ENCODE measurements at regions of chr22 and their contacts with region 1.

Region 1: DNA sequence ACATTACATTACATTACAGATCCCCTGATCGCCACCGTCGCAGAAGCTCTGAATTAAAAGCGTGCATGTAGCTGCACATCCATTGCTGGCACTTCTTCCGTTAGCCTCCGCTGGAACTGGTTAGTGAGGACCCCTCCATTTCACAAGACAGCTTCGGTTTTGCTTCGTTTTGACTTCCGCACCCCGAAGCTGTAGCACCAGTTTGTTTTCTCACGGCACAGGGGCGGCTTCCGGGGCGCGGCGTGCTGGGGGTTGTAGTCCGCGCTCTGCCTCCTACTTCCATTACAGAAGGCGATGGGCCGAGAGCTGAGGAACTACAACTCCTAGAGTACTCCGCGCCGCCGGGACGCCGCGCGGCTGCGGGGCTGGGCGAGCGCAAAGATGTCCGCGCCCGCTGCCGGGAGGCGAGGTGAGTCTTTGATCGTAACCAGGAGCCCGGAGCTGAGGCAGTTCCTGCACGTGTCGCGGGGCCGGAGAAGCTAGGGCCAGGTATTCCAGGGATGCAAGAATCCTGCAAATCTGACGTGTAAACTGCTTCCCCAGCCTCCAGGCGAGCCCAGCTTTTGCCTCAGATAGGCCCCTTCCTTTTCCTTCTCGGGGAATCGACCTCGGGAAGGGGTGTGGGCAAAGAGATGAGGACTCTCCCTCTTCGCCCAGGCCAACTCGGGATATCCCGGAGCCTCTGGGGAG is at the start of gene PEX26:
- DNase-seq: peak; percentile 97
- ATAC-seq: peak; percentile 99
- H3K4me3 ChIP-seq: peak within 1 kb of the TSS; percentile 70 to 97 (median 92)
- H3K4me3 Mint-ChIP-seq: peak within 1 kb of the TSS; percentile 97
- H3K27ac ChIP-seq: peak within 1 kb of the TSS; percentile 75 to 89
- H3K27ac Mint-ChIP-seq: peak within 1 kb of the TSS; percentile 96
- H3K4me1 ChIP-seq: peaks cover 31 to 32% of the 10 kb centered on the region in 2 donors
- H3K4me1 Mint-ChIP-seq: peaks cover 44% of the 10 kb centered on the region
- H3K27me3 ChIP-seq: no peaks in the 10 kb centered on the region
- H3K27me3 Mint-ChIP-seq: no peaks in the 10 kb centered on the region
- CTCF ChIP-seq: no peak
- total RNA-seq, gene PEX26: 33.4 and 35.4 TPM in 2 replicates

Region 2: DNA sequence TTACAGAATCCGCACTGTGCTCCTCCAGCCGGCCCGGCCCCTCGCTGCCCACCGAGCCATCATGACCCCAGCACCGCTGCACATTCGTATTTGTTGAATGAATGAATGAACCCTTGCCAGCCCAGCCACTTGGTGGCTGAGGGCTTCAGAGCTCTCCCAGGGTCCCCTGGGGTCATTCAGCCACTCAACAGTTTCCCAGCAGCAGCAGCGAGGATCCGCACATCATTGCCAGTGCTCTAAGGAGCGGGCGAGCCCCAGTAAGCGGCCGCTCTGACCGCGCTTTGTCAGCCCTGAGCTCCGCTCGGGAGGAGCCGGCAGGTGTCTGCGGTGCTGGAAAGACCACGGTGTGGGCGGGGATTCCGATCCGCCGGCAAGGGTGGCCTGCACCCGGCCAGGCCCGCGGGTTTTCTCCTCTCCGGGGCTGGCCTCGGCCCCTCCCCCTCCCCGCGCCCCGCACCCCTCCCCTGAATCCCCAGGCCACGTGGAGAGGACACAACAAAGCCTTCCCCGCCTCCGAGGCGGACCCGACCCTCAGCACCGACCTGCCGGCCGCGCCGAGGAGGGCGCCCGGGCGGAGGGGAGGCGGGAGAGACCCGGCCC is 304.1 kb before region 1 on chr22:
- CTCF ChIA-PET with region 1: interaction called, 4 read pairs
- POLR2A ChIA-PET with region 1: no interaction called
- intact Hi-C with region 1: loop called (anchors 1 kb)
- DNase-seq: peak; percentile 73
- ATAC-seq: peak; percentile 35
- H3K4me3 ChIP-seq: peak overlapping the region; percentile 2 to 78 (median 62)
- H3K4me3 Mint-ChIP-seq: peak overlapping the region; percentile 87
- H3K27ac ChIP-seq: peak overlapping the region; percentile 57 to 86
- H3K27ac Mint-ChIP-seq: peak overlapping the region; percentile 93
- H3K4me1 ChIP-seq: peaks cover 61 to 86% of the 10 kb centered on the region in 2 donors
- H3K4me1 Mint-ChIP-seq: peaks cover 73% of the 10 kb centered on the region
- H3K27me3 ChIP-seq: no peaks in the 10 kb centered on the region
- H3K27me3 Mint-ChIP-seq: no peaks in the 10 kb centered on the region
- CTCF ChIP-seq: no peak

Region 3: GRCh38 chr22:17869285-17870096 is 208.3 kb before region 1 on chr22:
- CTCF ChIA-PET with region 1: interaction called, 11 read pairs
- POLR2A ChIA-PET with region 1: no interaction called
- intact Hi-C with region 1: no loop called
- DNase-seq: no peak
- ATAC-seq: no peak
- H3K4me3 ChIP-seq: no peak overlapping the region
- H3K4me3 Mint-ChIP-seq: no peak overlapping the region
- H3K27ac ChIP-seq: no peak overlapping the region
- H3K27ac Mint-ChIP-seq: no peak overlapping the region
- H3K4me1 ChIP-seq: no peaks in the 10 kb centered on the region
- H3K4me1 Mint-ChIP-seq: no peaks in the 10 kb centered on the region
- H3K27me3 ChIP-seq: no peaks in the 10 kb centered on the region
- H3K27me3 Mint-ChIP-seq: no peaks in the 10 kb centered on the region
- CTCF ChIP-seq: no peak

Region 4: GRCh38 chr22:17964643-17965042 is 113.1 kb before region 1 on chr22:
- CTCF ChIA-PET with region 1: interaction called, 25 read pairs
- POLR2A ChIA-PET with region 1: no interaction called
- intact Hi-C with region 1: no loop called
- DNase-seq: peak; percentile 81
- ATAC-seq: peak; percentile 86
- H3K4me3 ChIP-seq: peak overlapping the region in 3 of 5 experiments; percentile 18 to 44 (median 42)
- H3K4me3 Mint-ChIP-seq: peak overlapping the region; percentile 82
- H3K27ac ChIP-seq: peak overlapping the region; percentile 79 to 80
- H3K27ac Mint-ChIP-seq: peak overlapping the region; percentile 90
- H3K4me1 ChIP-seq: peaks cover 50 to 73% of the 10 kb centered on the region in 2 donors
- H3K4me1 Mint-ChIP-seq: peaks cover 82% of the 10 kb centered on the region
- H3K27me3 ChIP-seq: no peaks in the 10 kb centered on the region
- H3K27me3 Mint-ChIP-seq: no peaks in the 10 kb centered on the region
- CTCF ChIP-seq: no peak

Region 5: GRCh38 chr22:18024276-18024947 is 53.4 kb before region 1 on chr22 and contains the start of gene MICAL3:
- CTCF ChIA-PET with region 1: interaction called, 136 read pairs
- POLR2A ChIA-PET with region 1: interaction called, 5 read pairs
- intact Hi-C with region 1: loop called (anchors 1 kb)
- DNase-seq: peak; percentile 88
- ATAC-seq: peak; percentile 95
- H3K4me3 ChIP-seq: peak within 1 kb of the TSS; percentile 61 to 80 (median 76)
- H3K4me3 Mint-ChIP-seq: peak within 1 kb of the TSS; percentile 98
- H3K27ac ChIP-seq: peak within 1 kb of the TSS in 1 of 2 donors; percentile 53
- H3K27ac Mint-ChIP-seq: peak within 1 kb of the TSS; percentile 86
- H3K4me1 ChIP-seq: peaks cover 13 to 23% of the 10 kb centered on the region in 2 donors
- H3K4me1 Mint-ChIP-seq: peaks cover 22% of the 10 kb centered on the region
- H3K27me3 ChIP-seq: no peaks in the 10 kb centered on the region
- H3K27me3 Mint-ChIP-seq: no peaks in the 10 kb centered on the region
- CTCF ChIP-seq: peak; percentile 85
- total RNA-seq, gene MICAL3: 253 and 261 TPM in 2 replicates

Region 6: DNA sequence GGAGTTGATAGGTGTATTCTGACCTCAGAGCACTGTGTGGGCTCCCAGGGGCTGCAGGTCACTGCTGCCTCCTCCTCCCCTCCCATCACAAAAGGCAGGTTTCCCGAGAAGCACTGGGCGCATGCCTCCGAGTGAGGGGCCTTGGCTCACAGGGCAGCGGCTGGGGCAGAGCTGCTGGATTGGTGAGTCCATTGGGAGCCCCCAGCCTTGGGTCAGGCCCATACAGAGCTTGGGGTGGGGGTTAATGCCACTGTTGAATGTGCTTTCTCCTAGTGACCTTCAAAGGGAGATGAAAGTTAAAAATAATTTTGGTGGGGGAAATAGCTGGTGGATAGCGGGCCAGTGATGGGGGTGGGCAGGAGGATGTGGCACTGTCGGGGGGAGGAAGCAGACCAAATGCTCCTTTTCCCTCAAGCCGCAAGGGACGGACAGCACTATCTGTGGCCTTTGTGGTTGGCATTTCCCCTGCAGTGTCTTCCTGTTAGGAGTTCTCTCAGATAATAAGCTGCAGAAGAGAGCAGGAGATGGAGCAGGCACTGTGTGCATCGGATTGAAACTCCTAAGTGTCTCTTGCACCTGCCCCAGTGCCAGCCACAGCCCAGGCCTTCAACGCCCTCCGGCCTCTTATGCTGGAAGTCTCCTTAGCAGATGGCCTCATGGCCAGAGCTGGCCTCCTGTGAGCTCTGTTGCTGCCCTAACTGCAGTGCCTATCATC is 36.1 kb after region 1 on chr22:
- CTCF ChIA-PET with region 1: no interaction called
- POLR2A ChIA-PET with region 1: no interaction called
- intact Hi-C with region 1: no loop called
- DNase-seq: no peak
- ATAC-seq: no peak
- H3K4me3 ChIP-seq: no peak overlapping the region
- H3K4me3 Mint-ChIP-seq: no peak overlapping the region
- H3K27ac ChIP-seq: no peak overlapping the region
- H3K27ac Mint-ChIP-seq: no peak overlapping the region
- H3K4me1 ChIP-seq: peaks cover 28 to 32% of the 10 kb centered on the region in 2 donors
- H3K4me1 Mint-ChIP-seq: peaks cover 24% of the 10 kb centered on the region
- H3K27me3 ChIP-seq: peaks cover 0 to 41% (median 14%) of the 10 kb centered on the region in 4 experiments
- H3K27me3 Mint-ChIP-seq: peaks cover 28% of the 10 kb centered on the region
- CTCF ChIP-seq: no peak

Region 7: GRCh38 chr22:18152519-18152918 is 74.7 kb after region 1 on chr22:
- CTCF ChIA-PET with region 1: interaction called, 4 read pairs
- POLR2A ChIA-PET with region 1: interaction called, 3 read pairs
- intact Hi-C with region 1: loop called (anchors 1 kb)
- DNase-seq: no peak
- ATAC-seq: no peak
- H3K4me3 ChIP-seq: no peak overlapping the region
- H3K4me3 Mint-ChIP-seq: peak overlapping the region; percentile 35
- H3K27ac ChIP-seq: no peak overlapping the region
- H3K27ac Mint-ChIP-seq: no peak overlapping the region
- H3K4me1 ChIP-seq: peaks cover 6 to 14% of the 10 kb centered on the region in 2 donors
- H3K4me1 Mint-ChIP-seq: peaks cover 16% of the 10 kb centered on the region
- H3K27me3 ChIP-seq: no peaks in the 10 kb centered on the region
- H3K27me3 Mint-ChIP-seq: no peaks in the 10 kb centered on the region
- CTCF ChIP-seq: no peak